ENCODE measurements at regions of chr5 and their contacts with region 1.

Region 1: DNA sequence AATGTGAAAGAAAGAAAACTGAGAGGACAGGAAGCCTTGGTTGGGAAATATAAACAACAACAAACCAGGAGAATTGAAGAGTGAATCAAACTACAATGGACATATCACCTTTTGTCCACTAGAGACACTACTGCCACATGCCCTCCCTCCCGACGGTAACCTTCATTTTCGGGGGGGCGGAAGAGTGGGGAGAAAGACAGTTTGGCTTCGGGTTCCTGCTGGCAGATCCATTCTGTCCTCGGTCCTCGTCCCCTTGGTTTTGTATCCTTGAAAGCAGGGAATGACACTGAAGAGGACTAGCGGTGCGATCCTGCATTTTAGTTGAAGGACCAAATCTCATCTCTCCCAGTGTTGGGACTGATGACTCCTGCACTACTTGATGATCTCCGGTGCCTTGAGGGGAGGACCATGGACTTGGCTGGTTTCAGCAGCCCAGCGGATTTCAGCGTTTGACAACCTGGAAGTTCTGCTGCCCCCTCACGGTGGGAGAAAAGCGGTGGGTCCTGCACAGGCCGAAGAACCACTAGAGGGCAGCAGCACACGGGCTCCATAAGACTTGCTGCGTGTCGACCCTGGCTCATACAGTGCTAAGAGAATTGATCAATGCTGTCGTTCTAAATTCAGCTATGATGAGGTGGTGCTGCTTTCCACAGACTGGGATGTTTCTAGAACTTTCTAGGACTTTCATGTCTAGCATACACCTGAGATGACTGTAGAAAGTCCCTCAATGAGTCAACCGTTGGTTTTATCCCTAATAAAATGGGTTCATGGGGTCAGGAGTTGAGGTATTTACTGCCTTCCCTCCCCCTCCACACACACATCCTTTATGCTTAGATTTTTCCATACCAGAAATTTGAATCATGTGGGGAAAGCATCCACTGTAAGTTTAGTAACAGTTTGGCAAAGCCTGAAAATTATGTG is 15.1 kb upstream of the ZNF131 start:
- DNase-seq: peak; percentile 90
- ATAC-seq: peak; percentile 97
- H3K4me3 ChIP-seq: peak overlapping the region; percentile 45 to 66 (median 45)
- H3K27ac ChIP-seq: peak overlapping the region; percentile 15
- H3K4me1 ChIP-seq: peaks cover 15% of the 10 kb centered on the region
- H3K27me3 ChIP-seq: no peaks in the 10 kb centered on the region
- CTCF ChIP-seq: peak; percentile 99
- EP300 ChIP-seq: no peak
- POLR2A ChIP-seq: no peak
- RAD21 ChIP-seq: peak; percentile 93

Region 2: GRCh38 chr5:42908509-42909488 is 196.8 kb before region 1 on chr5:
- CTCF ChIA-PET with region 1: interaction called, 22 read pairs
- POLR2A ChIA-PET with region 1: no interaction called
- in situ Hi-C with region 1: no loop called
- intact Hi-C with region 1: loop called (anchors 1 kb)
- DNase-seq: peak; percentile 81
- ATAC-seq: peak; percentile 92
- H3K4me3 ChIP-seq: peak overlapping the region; percentile 25 to 67 (median 61)
- H3K27ac ChIP-seq: no peak overlapping the region
- H3K4me1 ChIP-seq: peaks cover 17% of the 10 kb centered on the region
- H3K27me3 ChIP-seq: no peaks in the 10 kb centered on the region
- CTCF ChIP-seq: peak; percentile 92
- EP300 ChIP-seq: no peak
- POLR2A ChIP-seq: no peak
- RAD21 ChIP-seq: peak; percentile 65; the same call in 1 of the 2 replicates

Region 3: GRCh38 chr5:43040287-43041098 is 65.1 kb before region 1 on chr5 and contains the start of gene ANXA2R:
- CTCF ChIA-PET with region 1: interaction called, 17 read pairs
- POLR2A ChIA-PET with region 1: no interaction called
- in situ Hi-C with region 1: no loop called
- intact Hi-C with region 1: loop called (anchors 2 kb)
- DNase-seq: peak; percentile 81
- ATAC-seq: peak; percentile 55
- H3K4me3 ChIP-seq: peak within 1 kb of the TSS; percentile 77 to 82 (median 81)
- H3K27ac ChIP-seq: peak within 1 kb of the TSS; percentile 82
- H3K4me1 ChIP-seq: peaks cover 17% of the 10 kb centered on the region
- H3K27me3 ChIP-seq: no peaks in the 10 kb centered on the region; a peak in 1 of 5 replicates
- CTCF ChIP-seq: peak; percentile 85
- EP300 ChIP-seq: no peak
- POLR2A ChIP-seq: no peak; a peak in 1 of 4 replicates
- RAD21 ChIP-seq: no peak
- total RNA-seq, gene ANXA2R: 0.76 and 0.95 TPM in 2 replicates

Region 4: DNA sequence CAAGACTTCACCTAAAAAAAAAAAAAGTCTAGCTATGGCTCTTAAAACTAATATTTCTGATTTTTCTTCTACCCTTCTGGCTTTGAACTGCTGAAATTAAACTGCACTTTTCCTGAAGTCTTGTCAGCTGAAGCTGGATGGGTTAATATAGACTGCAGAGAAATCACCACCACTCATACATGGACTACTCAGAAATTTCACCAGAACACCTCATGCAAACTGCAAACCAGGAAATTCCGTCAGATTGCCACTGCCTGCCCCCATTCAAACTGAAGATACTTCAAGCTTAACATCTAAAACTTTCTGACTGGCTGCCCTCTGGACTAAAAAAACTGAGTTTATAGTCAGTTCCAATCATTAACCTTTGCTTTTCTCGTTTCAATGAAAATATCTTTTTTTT is 54.0 kb before region 1 on chr5:
- CTCF ChIA-PET with region 1: no interaction called
- POLR2A ChIA-PET with region 1: no interaction called
- in situ Hi-C with region 1: no loop called
- intact Hi-C with region 1: no loop called
- DNase-seq: no peak
- ATAC-seq: no peak
- H3K4me3 ChIP-seq: no peak overlapping the region
- H3K27ac ChIP-seq: no peak overlapping the region
- H3K4me1 ChIP-seq: no peaks in the 10 kb centered on the region
- H3K27me3 ChIP-seq: no peaks in the 10 kb centered on the region
- CTCF ChIP-seq: no peak
- EP300 ChIP-seq: no peak
- POLR2A ChIP-seq: no peak
- RAD21 ChIP-seq: no peak

Region 5: DNA sequence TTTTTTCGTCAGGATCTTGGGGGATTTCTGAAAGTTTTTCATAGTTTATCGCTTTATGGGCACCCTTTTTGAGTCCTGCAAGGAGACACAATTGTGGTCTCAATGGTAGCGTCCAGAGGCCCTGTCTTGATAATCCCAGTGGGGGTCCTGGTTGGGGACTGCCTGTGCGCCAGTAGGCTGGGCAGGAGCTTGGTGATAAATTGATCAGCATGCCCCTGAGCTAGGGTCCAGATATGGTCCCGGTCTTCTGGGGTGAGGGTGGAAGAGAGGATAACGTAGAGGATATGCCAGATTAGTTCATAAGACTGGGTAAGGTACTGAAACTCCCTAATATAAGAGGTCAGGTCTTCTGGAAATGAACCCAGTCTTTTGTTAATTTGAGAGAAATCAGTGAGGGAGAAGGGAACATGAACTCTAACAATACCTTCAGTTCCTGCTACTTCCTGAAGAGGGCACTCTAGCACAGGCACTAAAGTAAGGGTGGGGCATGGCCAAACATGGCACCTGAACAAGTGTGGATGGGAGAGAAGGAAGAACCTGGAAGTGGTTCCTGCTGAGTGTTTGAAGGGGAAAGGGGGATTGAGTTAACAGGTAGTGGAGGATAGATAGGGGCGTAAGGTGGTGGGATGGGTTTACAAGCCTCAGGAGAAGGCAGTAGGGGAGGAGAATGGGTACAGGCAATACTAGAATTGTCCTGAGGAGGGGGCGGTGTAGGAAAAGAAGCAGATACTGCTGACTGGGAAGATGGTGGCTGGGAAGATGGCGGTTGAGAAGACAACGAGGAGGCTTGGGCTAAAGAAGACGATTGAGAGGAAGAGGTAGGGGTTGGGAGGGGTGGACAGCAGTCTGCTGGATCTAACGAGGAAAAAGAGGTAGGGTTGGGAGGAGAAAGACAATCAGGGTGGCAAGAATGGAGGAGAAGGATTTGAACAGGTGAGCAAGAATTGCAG is 31.8 kb before region 1 on chr5:
- CTCF ChIA-PET with region 1: interaction called, 21 read pairs
- POLR2A ChIA-PET with region 1: no interaction called
- in situ Hi-C with region 1: no loop called
- intact Hi-C with region 1: loop called (anchors 2 kb)
- DNase-seq: peak; percentile 49
- ATAC-seq: peak; percentile 76
- H3K4me3 ChIP-seq: no peak overlapping the region
- H3K27ac ChIP-seq: no peak overlapping the region
- H3K4me1 ChIP-seq: peaks cover 25% of the 10 kb centered on the region
- H3K27me3 ChIP-seq: no peaks in the 10 kb centered on the region
- CTCF ChIP-seq: peak; percentile 75
- EP300 ChIP-seq: no peak
- POLR2A ChIP-seq: no peak
- RAD21 ChIP-seq: peak; percentile 43

Region 6: GRCh38 chr5:43389679-43390329 is 284.2 kb after region 1 on chr5:
- CTCF ChIA-PET with region 1: interaction called, 24 read pairs
- POLR2A ChIA-PET with region 1: no interaction called
- in situ Hi-C with region 1: no loop called
- intact Hi-C with region 1: loop called (anchors 1 kb)
- DNase-seq: peak; percentile 87
- ATAC-seq: peak; percentile 98
- H3K4me3 ChIP-seq: no peak overlapping the region
- H3K27ac ChIP-seq: no peak overlapping the region
- H3K4me1 ChIP-seq: no peaks in the 10 kb centered on the region
- H3K27me3 ChIP-seq: no peaks in the 10 kb centered on the region
- CTCF ChIP-seq: peak; percentile 87
- EP300 ChIP-seq: no peak
- POLR2A ChIP-seq: no peak
- RAD21 ChIP-seq: peak; percentile 88